Activated T-helper 2 cell treated with anti-CD3 and anti-CD28 coated beads, Interferon-gamma antibody, Interleukin-2, Interleukin-4, amounts not matched to agents 10 μg/mL and 5 μg/mL and 100 μg/mL, durations not matched to agents 14 hours and 24 hours and 36 hours (primary cell): ENCODE measurements at regions of chr3 and their contacts with region 1.

Region 1: DNA sequence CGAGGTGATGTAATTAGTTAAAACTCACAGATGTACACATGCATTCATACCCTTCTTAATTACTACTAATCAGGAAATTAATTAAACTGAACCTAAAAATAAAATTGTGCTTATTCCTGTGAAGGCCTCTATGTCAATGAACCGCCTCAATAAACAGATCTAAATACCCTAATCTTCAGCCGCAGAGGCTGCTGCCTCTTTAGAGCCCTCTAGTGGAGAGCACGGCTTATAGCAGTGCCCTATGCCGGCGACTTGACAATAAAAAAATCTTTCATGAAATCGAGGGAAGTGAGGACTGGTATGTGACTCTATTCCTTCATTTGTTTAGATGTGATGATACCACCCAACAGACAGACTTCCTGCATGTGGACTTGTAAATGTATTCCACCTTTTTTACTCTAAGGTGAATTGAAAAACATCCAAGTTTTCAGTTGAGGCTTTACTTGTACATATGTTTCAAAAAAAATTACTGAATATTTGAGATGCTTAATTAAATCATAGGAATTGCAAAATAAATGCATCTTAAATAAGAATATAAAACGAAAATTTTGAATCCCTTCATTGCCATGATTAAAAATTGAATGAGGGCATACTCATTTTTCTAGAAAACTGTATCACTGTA is 8.3 kb upstream of the EPHA3 start:
- DNase-seq: peak; percentile 9
- H3K4me3 Mint-ChIP-seq: no peak overlapping the region
- H3K27ac Mint-ChIP-seq: no peak overlapping the region
- H3K4me1 Mint-ChIP-seq: no peaks in the 10 kb centered on the region
- H3K27me3 Mint-ChIP-seq: no peaks in the 10 kb centered on the region

Region 2: GRCh38 chr3:88203642-88204055 is 895.4 kb before region 1 on chr3:
- intact Hi-C with region 1: loop called (anchors 1 kb)
- DNase-seq: no peak
- H3K4me3 Mint-ChIP-seq: no peak overlapping the region
- H3K27ac Mint-ChIP-seq: no peak overlapping the region
- H3K4me1 Mint-ChIP-seq: peaks cover 1% of the 10 kb centered on the region
- H3K27me3 Mint-ChIP-seq: peaks cover 5% of the 10 kb centered on the region

Region 3: GRCh38 chr3:88219138-88219792 is 879.8 kb before region 1 on chr3:
- intact Hi-C with region 1: loop called (anchors 5 kb)
- DNase-seq: no peak
- H3K4me3 Mint-ChIP-seq: no peak overlapping the region
- H3K27ac Mint-ChIP-seq: no peak overlapping the region
- H3K4me1 Mint-ChIP-seq: no peaks in the 10 kb centered on the region
- H3K27me3 Mint-ChIP-seq: no peaks in the 10 kb centered on the region

Region 4: GRCh38 chr3:88742106-88742505 is 357.0 kb before region 1 on chr3:
- intact Hi-C with region 1: no loop called
- DNase-seq: no peak
- H3K4me3 Mint-ChIP-seq: no peak overlapping the region
- H3K27ac Mint-ChIP-seq: no peak overlapping the region
- H3K4me1 Mint-ChIP-seq: no peaks in the 10 kb centered on the region
- H3K27me3 Mint-ChIP-seq: no peaks in the 10 kb centered on the region

Region 5: DNA sequence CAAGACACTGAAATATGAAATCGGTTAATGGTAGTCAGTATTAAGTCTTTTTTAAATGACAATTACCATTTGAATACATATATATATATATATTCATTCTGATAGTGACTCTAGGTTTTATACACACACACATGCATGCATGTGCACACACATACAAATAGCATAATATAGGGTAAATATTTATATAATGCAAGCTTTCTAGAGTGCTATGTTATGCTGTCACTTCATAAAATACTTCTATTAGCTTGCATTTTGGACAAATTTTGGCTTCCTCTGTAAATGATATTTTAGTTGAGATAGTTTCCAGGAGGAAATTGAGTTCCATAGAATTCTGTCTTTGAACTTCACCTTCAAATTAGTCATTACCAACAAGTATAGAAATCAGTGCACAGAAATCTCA is 81.5 kb before region 1 on chr3:
- intact Hi-C with region 1: no loop called
- DNase-seq: no peak
- H3K4me3 Mint-ChIP-seq: no peak overlapping the region
- H3K27ac Mint-ChIP-seq: no peak overlapping the region
- H3K4me1 Mint-ChIP-seq: no peaks in the 10 kb centered on the region
- H3K27me3 Mint-ChIP-seq: no peaks in the 10 kb centered on the region